ENCODE measurements at regions of chr15 and their contacts with region 1.

Region 1: DNA sequence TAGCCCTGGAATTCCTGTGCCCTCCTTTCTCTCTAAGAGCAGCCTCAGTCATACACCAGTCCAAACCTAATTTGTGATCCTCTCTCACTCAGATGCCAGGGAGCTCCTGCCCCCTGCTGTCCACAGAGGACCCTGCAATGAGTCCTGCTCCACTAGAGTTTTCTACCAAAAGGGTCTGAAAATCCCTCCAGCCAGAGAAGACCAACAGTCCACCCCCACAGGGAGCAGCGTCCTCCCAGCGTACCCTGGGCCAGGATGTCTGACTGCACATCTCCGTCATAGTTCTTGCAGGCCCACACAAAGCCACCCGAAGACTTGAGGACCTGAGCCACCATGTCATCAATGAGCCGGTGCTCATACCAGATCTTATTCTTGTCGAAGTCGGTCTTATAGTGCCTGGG is 15.4 kb downstream of the IDH2 start:
- DNase-seq: peak; percentile 57 to 65
- H3K4me3 ChIP-seq: no peak overlapping the region
- H3K4me3 Mint-ChIP-seq: no peak overlapping the region
- H3K27ac Mint-ChIP-seq: no peak overlapping the region
- H3K4me1 ChIP-seq: no peaks in the 10 kb centered on the region
- H3K4me1 Mint-ChIP-seq: no peaks in the 10 kb centered on the region
- H3K27me3 ChIP-seq: no peaks in the 10 kb centered on the region
- H3K27me3 Mint-ChIP-seq: no peaks in the 10 kb centered on the region
- CTCF ChIP-seq: peak; percentile 79 to 81

Region 2: DNA sequence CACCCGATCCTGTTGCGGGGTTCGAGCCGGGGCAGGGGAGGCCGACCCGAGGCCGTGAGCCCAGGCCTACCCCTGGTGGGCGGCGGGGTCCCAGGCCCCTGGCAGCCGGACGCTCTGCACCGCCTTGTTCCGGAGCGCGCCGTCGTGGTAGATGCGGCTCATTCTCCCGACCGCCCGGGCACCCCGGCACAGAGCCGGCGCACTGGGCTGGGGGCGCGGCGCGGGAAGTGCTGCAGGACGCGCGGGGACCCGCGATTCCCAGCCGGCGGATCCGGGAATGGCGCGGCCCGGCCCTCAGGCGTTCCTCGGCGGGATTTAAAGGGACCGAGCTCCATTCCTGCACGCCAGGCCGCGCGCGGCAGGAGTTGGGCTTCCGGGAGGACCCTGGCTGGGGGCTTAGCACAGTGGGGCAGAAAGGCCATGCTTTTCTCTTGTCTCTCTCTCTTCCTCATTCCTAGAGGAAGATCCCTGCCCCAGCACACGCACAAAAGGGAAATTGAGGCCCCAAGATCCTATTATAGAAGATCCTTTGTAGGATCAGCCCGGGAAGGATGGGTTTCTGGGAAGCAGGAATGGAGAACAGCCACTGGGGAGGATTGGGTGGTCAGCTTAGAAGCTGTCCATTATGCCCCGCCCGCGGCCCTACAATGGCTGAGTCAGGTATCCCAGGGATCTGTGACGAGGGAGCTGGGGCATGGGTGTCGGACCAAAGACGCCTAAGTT is 174.0 kb before region 1 on chr15 and contains the start of gene ARPIN:
- CTCF ChIA-PET with region 1: no interaction called
- POLR2A ChIA-PET with region 1: no interaction called
- intact Hi-C with region 1: loop called (anchors 5 kb)
- DNase-seq: peak; percentile 67 to 77
- H3K4me3 ChIP-seq: peak within 1 kb of the TSS; percentile 54
- H3K4me3 Mint-ChIP-seq: peak within 1 kb of the TSS; percentile 84
- H3K27ac Mint-ChIP-seq: peak within 1 kb of the TSS; percentile 75
- H3K4me1 ChIP-seq: peaks cover 23% of the 10 kb centered on the region
- H3K4me1 Mint-ChIP-seq: peaks cover 33% of the 10 kb centered on the region
- H3K27me3 ChIP-seq: no peaks in the 10 kb centered on the region
- H3K27me3 Mint-ChIP-seq: no peaks in the 10 kb centered on the region
- CTCF ChIP-seq: no peak
- total RNA-seq, gene ARPIN: 11.5 and 13.3 TPM in 2 replicates

Region 3: GRCh38 chr15:90020021-90020735 is 66.7 kb before region 1 on chr15:
- CTCF ChIA-PET with region 1: no interaction called
- POLR2A ChIA-PET with region 1: no interaction called
- intact Hi-C with region 1: no loop called
- DNase-seq: no peak
- H3K4me3 ChIP-seq: no peak overlapping the region
- H3K4me3 Mint-ChIP-seq: no peak overlapping the region
- H3K27ac Mint-ChIP-seq: no peak overlapping the region
- H3K4me1 ChIP-seq: no peaks in the 10 kb centered on the region
- H3K4me1 Mint-ChIP-seq: peaks cover 5% of the 10 kb centered on the region
- H3K27me3 ChIP-seq: no peaks in the 10 kb centered on the region
- H3K27me3 Mint-ChIP-seq: no peaks in the 10 kb centered on the region
- CTCF ChIP-seq: no peak

Region 4: GRCh38 chr15:90184786-90185569 is 98.1 kb after region 1 on chr15:
- CTCF ChIA-PET with region 1: no interaction called
- POLR2A ChIA-PET with region 1: no interaction called
- intact Hi-C with region 1: no loop called
- DNase-seq: peak; percentile 65 to 67
- H3K4me3 ChIP-seq: peak overlapping the region; percentile 74
- H3K4me3 Mint-ChIP-seq: peak overlapping the region; percentile 82
- H3K27ac Mint-ChIP-seq: peak overlapping the region; percentile 69
- H3K4me1 ChIP-seq: peaks cover 11% of the 10 kb centered on the region
- H3K4me1 Mint-ChIP-seq: no peaks in the 10 kb centered on the region
- H3K27me3 ChIP-seq: no peaks in the 10 kb centered on the region
- H3K27me3 Mint-ChIP-seq: no peaks in the 10 kb centered on the region
- CTCF ChIP-seq: no peak

Region 5: GRCh38 chr15:90680371-90680935 is 593.6 kb after region 1 on chr15:
- CTCF ChIA-PET with region 1: no interaction called
- POLR2A ChIA-PET with region 1: no interaction called
- intact Hi-C with region 1: no loop called
- DNase-seq: no peak
- H3K4me3 ChIP-seq: no peak overlapping the region
- H3K4me3 Mint-ChIP-seq: no peak overlapping the region
- H3K27ac Mint-ChIP-seq: no peak overlapping the region
- H3K4me1 ChIP-seq: no peaks in the 10 kb centered on the region
- H3K4me1 Mint-ChIP-seq: no peaks in the 10 kb centered on the region
- H3K27me3 ChIP-seq: no peaks in the 10 kb centered on the region
- H3K27me3 Mint-ChIP-seq: no peaks in the 10 kb centered on the region
- CTCF ChIP-seq: no peak